ENCODE measurements at regions of chr14 and their contacts with region 1.

Region 1: DNA sequence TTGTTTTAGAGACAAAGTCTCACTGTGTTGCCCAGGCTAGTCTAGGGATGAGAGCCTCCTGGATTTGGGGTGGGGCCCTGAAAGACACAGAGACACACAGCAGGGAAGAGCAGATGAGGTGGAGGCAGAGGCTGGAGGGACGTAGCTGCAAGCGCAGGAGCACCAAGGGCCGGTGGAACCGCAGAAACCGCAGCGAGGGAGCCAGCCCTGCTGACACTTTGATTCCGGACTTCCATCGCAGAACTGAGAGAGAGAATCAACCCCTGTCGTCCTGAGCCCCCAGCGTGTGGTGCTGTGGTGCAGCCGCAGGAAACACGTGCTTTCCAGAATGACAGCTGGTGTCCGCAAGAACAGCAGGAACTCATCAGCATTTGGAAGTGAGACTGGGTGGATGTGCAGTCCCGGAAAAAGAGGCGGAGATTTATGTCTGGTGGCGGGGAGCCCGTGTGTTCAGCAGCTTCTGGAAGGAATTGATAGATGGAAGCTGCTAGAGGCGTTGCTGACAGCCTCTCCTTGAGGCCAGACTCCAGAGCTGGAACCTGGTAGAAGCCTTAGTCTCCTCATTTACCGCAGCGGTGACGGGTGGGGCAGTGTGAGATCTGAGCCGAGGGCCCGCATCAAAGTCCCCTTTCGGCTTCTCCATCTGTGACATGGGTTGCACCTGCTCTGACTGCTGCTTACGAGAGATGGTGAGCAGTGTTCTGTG is 21.9 kb upstream of the KLC1 start:
- DNase-seq: peak; percentile 83 to 86
- H3K4me3 ChIP-seq: peak overlapping the region; percentile 14 to 40
- H3K27ac ChIP-seq: no peak overlapping the region
- H3K4me1 ChIP-seq: peaks cover 0 to 16% (median 12%) of the 10 kb centered on the region in 4 donors
- H3K27me3 ChIP-seq: peaks cover 0 to 5% of the 10 kb centered on the region in 2 donors
- CTCF ChIP-seq: peak; percentile 27 to 37

Region 2: GRCh38 chr14:103418481-103418818 is 188.7 kb before region 1 on chr14:
- intact Hi-C with region 1: no loop called
- DNase-seq: no peak
- H3K4me3 ChIP-seq: no peak overlapping the region
- H3K27ac ChIP-seq: no peak overlapping the region
- H3K4me1 ChIP-seq: peaks cover 0 to 40% (median 15%) of the 10 kb centered on the region in 4 donors
- H3K27me3 ChIP-seq: no peaks in the 10 kb centered on the region
- CTCF ChIP-seq: no peak

Region 3: GRCh38 chr14:103730490-103731035 is 123.4 kb after region 1 on chr14:
- intact Hi-C with region 1: loop called (anchors 10 kb)
- DNase-seq: peak in 1 of 2 donors; percentile 60
- H3K4me3 ChIP-seq: no peak overlapping the region
- H3K27ac ChIP-seq: peak overlapping the region in 1 of 2 donors; percentile 4
- H3K4me1 ChIP-seq: peaks cover 0 to 44% (median 20%) of the 10 kb centered on the region in 4 donors
- H3K27me3 ChIP-seq: no peaks in the 10 kb centered on the region
- CTCF ChIP-seq: no peak

Region 4: GRCh38 chr14:103808403-103809001 is 201.4 kb after region 1 on chr14:
- intact Hi-C with region 1: no loop called
- DNase-seq: peak; percentile 66 to 75
- H3K4me3 ChIP-seq: no peak overlapping the region
- H3K27ac ChIP-seq: no peak overlapping the region
- H3K4me1 ChIP-seq: peaks cover 0 to 9% (median 3%) of the 10 kb centered on the region in 4 donors
- H3K27me3 ChIP-seq: no peaks in the 10 kb centered on the region
- CTCF ChIP-seq: peak; percentile 69 to 87

Measured in tibial artery (tissue), 4 donors.